ENCODE measurements at regions of chr3 and their contacts with region 1.

Region 1: GRCh38 chr3:46909535-46910442 is 32.3 kb downstream of the PTH1R start:
- DNase-seq: peak; percentile 80
- H3K4me3 ChIP-seq: no peak overlapping the region
- H3K27ac ChIP-seq: no peak overlapping the region
- H3K4me1 ChIP-seq: peaks cover 11% of the 10 kb centered on the region
- H3K27me3 ChIP-seq: no peaks in the 10 kb centered on the region
- CTCF ChIP-seq: peak; percentile 74

Region 2: GRCh38 chr3:46866720-46867549 is 42.9 kb before region 1 on chr3:
- CTCF ChIA-PET with region 1: interaction called, 4 read pairs
- POLR2A ChIA-PET with region 1: no interaction called
- intact Hi-C with region 1: loop called (anchors 5 kb)
- DNase-seq: peak; percentile 36
- H3K4me3 ChIP-seq: no peak overlapping the region
- H3K27ac ChIP-seq: no peak overlapping the region
- H3K4me1 ChIP-seq: no peaks in the 10 kb centered on the region
- H3K27me3 ChIP-seq: no peaks in the 10 kb centered on the region
- CTCF ChIP-seq: peak; percentile 72